ENCODE measurements at regions of chr4 and their contacts with region 1.

Region 1: GRCh38 chr4:101187841-101188240 is 159.5 kb downstream of the PPP3CA start:
- DNase-seq: no peak
- ATAC-seq: no peak
- H3K4me3 ChIP-seq: no peak overlapping the region
- H3K27ac ChIP-seq: no peak overlapping the region; the same call in 1 of the 2 replicates
- H3K4me1 ChIP-seq: no peaks in the 10 kb centered on the region; the same call in 1 of the 2 replicates
- H3K27me3 ChIP-seq: no peaks in the 10 kb centered on the region
- CTCF ChIP-seq: peak; percentile 33; the same call in 1 of the 2 replicates

Region 2: GRCh38 chr4:101347557-101348366 is 159.9 kb after region 1 on chr4:
- CTCF ChIA-PET with region 1: no interaction called
- POLR2A ChIA-PET with region 1: no interaction called
- in situ Hi-C with region 1: no loop called
- intact Hi-C with region 1: loop called (anchors 5 kb)
- DNase-seq: peak; percentile 72
- ATAC-seq: peak; percentile 88
- H3K4me3 ChIP-seq: peak overlapping the region; percentile 72 to 82
- H3K27ac ChIP-seq: peak overlapping the region; percentile 69
- H3K4me1 ChIP-seq: peaks cover 14% of the 10 kb centered on the region
- H3K27me3 ChIP-seq: no peaks in the 10 kb centered on the region
- CTCF ChIP-seq: no peak; the same call in 1 of the 2 replicates